ENCODE measurements at regions of chr3 and their contacts with region 1.

Region 1: DNA sequence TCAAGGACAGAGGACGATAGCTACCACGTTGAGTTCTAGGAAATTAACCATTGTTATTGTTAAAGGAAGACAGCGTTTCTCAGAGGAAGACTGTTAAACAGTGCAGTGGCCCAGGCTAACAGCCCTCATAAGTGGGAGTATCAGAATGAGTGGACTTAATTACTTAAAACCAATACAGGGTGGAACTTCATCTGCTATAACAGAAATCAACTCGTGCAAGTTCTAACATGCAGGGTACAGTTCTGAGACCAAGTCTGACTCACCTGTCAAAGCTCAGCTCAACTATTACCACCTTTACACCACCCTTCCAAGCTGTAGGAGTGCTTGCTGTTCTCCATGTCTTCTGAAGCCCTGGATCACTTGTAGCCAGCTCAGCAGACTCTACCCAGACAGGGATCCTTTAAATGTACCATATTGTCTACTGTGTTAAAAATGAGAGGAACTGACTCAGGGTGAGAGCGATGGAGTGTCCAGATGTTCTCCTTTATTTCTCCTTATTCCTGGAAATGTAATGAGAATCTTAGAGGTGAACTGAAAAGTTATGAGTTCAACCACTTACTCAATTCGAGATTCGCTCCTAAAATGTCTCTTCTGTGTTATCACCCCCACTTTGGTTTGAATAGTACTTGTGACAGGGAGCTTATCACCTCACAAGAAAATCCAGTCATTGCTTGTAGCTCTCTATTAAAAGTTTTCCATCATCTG is 26.5 kb downstream of the CD86 start:
- DNase-seq: no peak
- H3K4me3 Mint-ChIP-seq: peak overlapping the region; percentile 30
- H3K27ac Mint-ChIP-seq: peak overlapping the region; percentile 83
- H3K4me1 Mint-ChIP-seq: peaks cover 97% of the 10 kb centered on the region
- H3K27me3 Mint-ChIP-seq: no peaks in the 10 kb centered on the region

Region 2: DNA sequence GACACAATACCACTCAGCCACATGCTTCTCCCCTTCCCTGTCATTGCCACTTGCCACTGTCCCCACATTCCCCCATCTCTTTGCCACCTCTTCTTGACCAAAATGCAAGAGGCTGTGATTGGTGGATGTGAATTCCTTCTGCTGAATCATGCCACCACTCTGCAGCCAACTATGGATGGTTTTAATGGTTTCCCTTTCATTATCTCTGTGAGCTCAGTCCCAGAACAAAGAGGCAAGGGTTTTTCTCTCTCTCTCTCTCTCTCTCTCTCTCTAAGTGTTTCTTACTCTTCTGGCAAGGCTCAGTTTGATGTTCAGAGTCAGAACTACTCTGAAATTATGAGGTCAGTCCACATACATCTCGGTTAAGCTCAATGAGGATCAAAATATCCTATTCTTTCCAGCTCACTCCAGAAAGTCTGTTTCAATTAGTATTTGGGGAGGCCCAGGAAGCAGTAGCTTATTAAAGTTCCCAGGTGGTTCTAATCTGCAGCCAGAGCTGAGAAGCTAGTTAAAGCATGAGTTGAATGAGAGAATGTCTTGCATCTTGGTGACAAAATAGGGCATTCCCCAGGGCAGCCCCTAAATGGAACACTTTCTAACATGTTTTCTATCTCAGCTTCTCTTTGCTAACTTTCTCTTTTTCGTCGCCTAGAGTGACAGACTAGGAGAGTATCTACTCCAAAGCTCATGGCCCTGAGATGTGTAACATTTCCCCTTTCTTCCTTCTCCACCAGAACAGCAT is 51.1 kb before region 1 on chr3:
- CTCF ChIA-PET with region 1: interaction called, 4 read pairs
- POLR2A ChIA-PET with region 1: interaction called, 13 read pairs
- DNase-seq: peak; percentile 51
- H3K4me3 Mint-ChIP-seq: peak overlapping the region; percentile 50
- H3K27ac Mint-ChIP-seq: peak overlapping the region; percentile 86
- H3K4me1 Mint-ChIP-seq: peaks cover 28% of the 10 kb centered on the region
- H3K27me3 Mint-ChIP-seq: no peaks in the 10 kb centered on the region

Measured in activated CD4-positive, alpha-beta memory T cell treated with anti-CD3 and anti-CD28 coated beads, Interleukin-2, amount 10 ng/mL, durations not matched to agents 7 days and 5 days (primary cell).